A673 (cell line): ENCODE measurements at regions of chr17 and their contacts with region 1.

Region 1: GRCh38 chr17:76466775-76467130 is 650 bp upstream of the AANAT start:
- DNase-seq: no peak
- H3K4me3 ChIP-seq: no peak overlapping the region
- H3K27ac ChIP-seq: no peak overlapping the region
- H3K4me1 ChIP-seq: peaks cover 10% of the 10 kb centered on the region
- H3K27me3 ChIP-seq: no peaks in the 10 kb centered on the region
- CTCF ChIP-seq: no peak

Region 2: GRCh38 chr17:76547184-76547641 is 80.5 kb after region 1 on chr17:
- CTCF ChIA-PET with region 1: interaction called, 4 read pairs
- POLR2A ChIA-PET with region 1: no interaction called
- intact Hi-C with region 1: loop called (anchors 1 kb)
- DNase-seq: peak; percentile 91
- H3K4me3 ChIP-seq: no peak overlapping the region
- H3K27ac ChIP-seq: peak overlapping the region; percentile 54
- H3K4me1 ChIP-seq: peaks cover 34% of the 10 kb centered on the region
- H3K27me3 ChIP-seq: no peaks in the 10 kb centered on the region
- CTCF ChIP-seq: peak; percentile 84

Region 3: DNA sequence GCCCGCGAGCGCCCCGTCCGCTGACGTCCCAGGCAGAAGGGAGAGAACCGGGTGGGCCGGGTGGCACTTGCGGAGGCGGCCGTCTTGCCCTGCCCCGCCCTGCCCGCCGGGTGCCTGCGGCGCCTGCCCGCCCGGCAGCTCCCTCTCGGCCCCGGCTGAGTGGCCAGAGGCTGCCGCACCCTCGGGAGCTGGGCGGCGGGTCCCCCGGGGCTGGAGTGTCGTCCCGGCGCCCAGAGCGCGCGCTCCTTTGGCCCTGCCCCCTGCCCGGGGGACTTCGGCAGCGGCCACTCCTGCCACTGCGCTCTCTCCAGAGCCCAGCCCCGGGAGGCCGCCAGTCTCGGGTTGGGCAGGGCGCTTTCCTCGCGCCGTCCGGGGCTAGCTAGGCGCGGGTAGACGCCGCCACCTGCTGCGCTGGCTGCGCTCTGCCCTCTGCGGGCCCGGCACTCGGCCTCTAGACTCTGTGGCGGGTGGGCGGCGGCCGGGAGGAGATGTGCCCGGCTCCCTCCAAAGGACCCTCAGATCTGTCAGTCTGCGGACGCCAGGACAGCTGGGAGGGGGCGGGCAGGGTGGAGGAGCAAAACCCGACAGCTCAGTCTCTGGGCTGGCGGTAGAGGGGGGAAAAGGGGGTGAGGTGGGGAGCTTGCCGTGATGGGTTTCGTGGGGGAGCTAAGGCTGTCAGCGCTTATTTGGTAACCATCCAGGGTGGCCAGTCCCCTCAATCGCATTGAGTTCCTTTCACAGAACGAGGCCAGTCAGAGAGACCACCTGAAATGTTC is 119.3 kb after region 1 on chr17 and contains the start of gene ST6GALNAC2:
- CTCF ChIA-PET with region 1: no interaction called
- POLR2A ChIA-PET with region 1: no interaction called
- intact Hi-C with region 1: no loop called
- DNase-seq: no peak
- H3K4me3 ChIP-seq: peak within 1 kb of the TSS; percentile 50
- H3K27ac ChIP-seq: no peak within 1 kb of the TSS
- H3K4me1 ChIP-seq: peaks cover 8% of the 10 kb centered on the region
- H3K27me3 ChIP-seq: peaks cover 28% of the 10 kb centered on the region
- CTCF ChIP-seq: no peak
- total RNA-seq, gene ST6GALNAC2: not detected in 2 replicates

Region 4: GRCh38 chr17:76737082-76737675 is 270.4 kb after region 1 on chr17 and contains the start of gene SRSF2:
- CTCF ChIA-PET with region 1: no interaction called
- POLR2A ChIA-PET with region 1: no interaction called
- intact Hi-C with region 1: no loop called
- DNase-seq: peak; percentile 100
- H3K4me3 ChIP-seq: peak within 1 kb of the TSS; percentile 77
- H3K27ac ChIP-seq: peak within 1 kb of the TSS; percentile 100
- H3K4me1 ChIP-seq: peaks cover 23% of the 10 kb centered on the region
- H3K27me3 ChIP-seq: no peaks in the 10 kb centered on the region
- CTCF ChIP-seq: no peak
- total RNA-seq, gene SRSF2: 406 and 440 TPM in 2 replicates